ENCODE measurements at regions of chr12 and their contacts with region 1.

Region 1: GRCh38 chr12:14960548-14961465 is 594 bp downstream of the ARHGDIB start:
- DNase-seq: peak; percentile 49
- H3K4me3 Mint-ChIP-seq: peak overlapping the region; percentile 88
- H3K27ac Mint-ChIP-seq: peak overlapping the region; percentile 96
- H3K4me1 Mint-ChIP-seq: peaks cover 43% of the 10 kb centered on the region
- H3K27me3 Mint-ChIP-seq: no peaks in the 10 kb centered on the region

Region 2: DNA sequence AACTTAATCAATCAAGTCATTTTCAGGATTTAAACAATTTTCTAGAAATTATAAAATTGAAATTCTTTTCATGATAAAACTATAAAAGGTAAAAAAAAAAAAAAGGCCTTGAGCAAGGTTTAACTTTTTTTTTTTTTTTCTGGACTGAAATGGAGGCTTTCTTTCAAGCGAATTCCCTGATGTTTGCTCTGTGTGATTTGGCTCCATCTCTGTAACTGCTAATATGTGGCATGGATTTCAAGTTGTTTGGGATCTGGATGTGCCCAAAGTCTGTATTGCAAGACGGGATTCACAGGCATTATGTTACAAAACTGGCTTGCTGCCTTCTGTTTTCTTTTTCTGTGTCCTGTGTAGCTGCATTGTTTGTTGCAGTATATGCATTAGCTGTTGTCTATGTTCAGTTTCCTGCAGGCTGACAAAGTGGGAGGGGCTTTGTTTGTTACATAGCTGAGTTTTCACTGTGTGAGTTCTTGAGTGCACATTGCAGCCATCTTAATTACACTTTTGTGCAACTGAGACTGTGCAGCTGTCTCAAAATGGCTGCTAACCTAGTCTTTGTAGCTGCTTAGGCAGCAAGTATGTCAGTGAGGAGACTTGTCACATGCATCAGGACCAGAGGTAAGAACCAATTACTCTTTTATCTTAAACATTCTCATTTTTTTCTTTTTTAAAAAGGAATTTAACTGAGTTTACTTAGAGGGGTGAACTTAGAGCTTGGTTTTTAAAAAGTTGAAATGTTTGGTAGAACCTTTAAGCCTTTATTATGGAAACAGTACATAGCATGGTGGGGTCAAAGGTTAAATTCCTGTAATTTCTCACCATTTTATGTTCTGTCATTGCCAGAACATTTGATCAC is 575.8 kb before region 1 on chr12:
- CTCF ChIA-PET with region 1: no interaction called
- POLR2A ChIA-PET with region 1: interaction called, 3 read pairs
- intact Hi-C with region 1: loop called (anchors 2 kb)
- DNase-seq: peak; percentile 77
- H3K4me3 Mint-ChIP-seq: peak overlapping the region; percentile 81
- H3K27ac Mint-ChIP-seq: peak overlapping the region; percentile 96
- H3K4me1 Mint-ChIP-seq: peaks cover 60% of the 10 kb centered on the region
- H3K27me3 Mint-ChIP-seq: no peaks in the 10 kb centered on the region

Region 3: DNA sequence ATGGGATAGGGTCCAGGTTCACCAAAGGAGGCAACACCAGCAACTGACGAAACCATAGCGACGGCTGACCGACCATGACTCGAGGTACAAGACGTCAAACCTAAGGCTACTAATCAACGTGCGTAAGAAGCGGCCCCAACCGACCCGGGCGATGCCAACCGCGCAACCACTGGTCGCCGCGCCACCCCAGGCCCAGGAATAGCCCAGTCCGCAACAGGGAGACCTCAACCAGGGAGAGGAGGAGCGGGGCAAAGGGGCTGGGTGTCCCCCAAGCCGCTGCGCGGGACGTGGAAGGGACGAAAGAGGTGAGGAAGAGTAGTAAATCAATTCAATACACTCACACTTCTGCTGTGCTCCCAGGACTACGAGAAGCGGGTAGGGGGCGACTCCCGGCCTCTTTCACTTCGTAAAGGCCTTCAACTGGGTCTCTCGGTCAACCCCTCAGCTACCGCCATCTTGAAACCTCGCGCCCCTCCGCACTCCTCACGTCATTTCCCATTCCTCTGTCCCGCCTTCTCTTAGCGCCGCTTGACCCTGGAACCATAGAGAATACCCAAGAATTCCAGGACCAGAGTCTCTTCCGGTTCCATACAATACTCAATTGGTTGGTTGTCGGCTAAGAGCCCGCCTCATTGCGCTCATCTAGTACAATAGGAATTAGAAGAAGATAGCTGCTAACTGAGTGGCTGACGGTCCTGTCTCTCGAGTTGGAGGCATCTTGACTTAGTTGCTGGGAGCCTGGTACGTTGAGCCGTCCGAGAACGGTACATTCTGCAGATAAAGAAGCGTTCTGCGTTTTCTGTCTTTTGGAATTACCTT is 157.6 kb before region 1 on chr12 and contains the starts of genes C12orf60 and WBP11:
- CTCF ChIA-PET with region 1: interaction called, 4 read pairs
- POLR2A ChIA-PET with region 1: interaction called, 7 read pairs
- intact Hi-C with region 1: loop called (anchors 1 kb)
- DNase-seq: peak; percentile 93
- H3K4me3 Mint-ChIP-seq: no peak within 1 kb of the TSS
- H3K27ac Mint-ChIP-seq: no peak within 1 kb of the TSS
- H3K4me1 Mint-ChIP-seq: peaks cover 35% of the 10 kb centered on the region
- H3K27me3 Mint-ChIP-seq: no peaks in the 10 kb centered on the region
- total RNA-seq, gene C12orf60: 3.3 to 3.4 TPM
- total RNA-seq, gene WBP11: 131 to 134 TPM

Region 4: DNA sequence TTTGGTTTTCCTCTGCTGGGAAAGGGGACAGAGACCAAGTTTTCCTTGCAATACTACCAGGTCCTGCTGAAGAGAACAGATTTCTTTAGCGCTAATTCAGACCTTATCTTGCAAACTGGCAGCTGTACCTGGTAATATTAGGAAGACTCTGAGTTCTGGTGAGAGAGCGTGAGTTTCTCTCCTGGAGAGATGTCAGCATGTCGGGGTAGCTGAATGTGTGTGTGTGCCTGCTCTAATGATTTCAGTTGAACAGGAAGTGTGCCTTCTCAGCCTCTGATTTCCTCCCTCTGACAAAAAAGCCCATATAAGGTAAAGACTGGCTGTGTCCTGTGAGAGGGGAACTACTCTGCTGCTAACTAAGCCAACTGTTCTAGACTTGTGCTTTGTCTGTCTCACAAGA is 12.1 kb before region 1 on chr12:
- CTCF ChIA-PET with region 1: interaction called, 7 read pairs
- POLR2A ChIA-PET with region 1: interaction called, 16 read pairs
- intact Hi-C with region 1: loop called (anchors 1 kb)
- DNase-seq: peak; percentile 69
- H3K4me3 Mint-ChIP-seq: peak overlapping the region; percentile 80
- H3K27ac Mint-ChIP-seq: peak overlapping the region; percentile 99
- H3K4me1 Mint-ChIP-seq: peaks cover 82% of the 10 kb centered on the region
- H3K27me3 Mint-ChIP-seq: no peaks in the 10 kb centered on the region

Measured in activated CD4-positive, alpha-beta memory T cell treated with anti-CD3 and anti-CD28 coated beads for 36 hours (primary cell).